Transverse colon (tissue), 4 donors: ENCODE measurements at regions of chr2 and their contacts with region 1.

Region 1: DNA sequence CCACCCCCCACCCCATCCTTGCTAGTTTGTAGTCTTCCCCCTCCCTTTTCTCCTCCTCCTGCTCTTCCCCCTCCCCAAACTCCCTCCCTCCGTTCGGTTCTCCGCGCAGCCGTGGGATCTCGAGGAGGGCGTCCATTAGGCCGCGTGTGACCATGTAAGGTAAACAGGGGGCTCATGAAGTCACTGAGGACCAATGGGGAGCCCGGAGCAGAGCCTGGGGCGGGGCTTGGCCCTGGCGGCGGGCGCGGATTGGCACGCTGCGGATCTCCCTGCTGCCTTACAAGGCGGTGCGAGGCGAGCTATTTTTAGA is 246 bp upstream of the KLF7 start:
- DNase-seq: peak; percentile 95
- H3K4me3 ChIP-seq: peak overlapping the region in 3 of 4 donors; percentile 69 to 87 (median 87)
- H3K27ac ChIP-seq: peak overlapping the region; percentile 99 to 100 (median 100)
- H3K4me1 ChIP-seq: peaks cover 0 to 20% (median 15%) of the 10 kb centered on the region in 4 donors
- H3K27me3 ChIP-seq: peaks cover 41% of the 10 kb centered on the region
- CTCF ChIP-seq: no peak
- EP300 ChIP-seq: no peak
- POLR2A ChIP-seq: no peak

Region 2: DNA sequence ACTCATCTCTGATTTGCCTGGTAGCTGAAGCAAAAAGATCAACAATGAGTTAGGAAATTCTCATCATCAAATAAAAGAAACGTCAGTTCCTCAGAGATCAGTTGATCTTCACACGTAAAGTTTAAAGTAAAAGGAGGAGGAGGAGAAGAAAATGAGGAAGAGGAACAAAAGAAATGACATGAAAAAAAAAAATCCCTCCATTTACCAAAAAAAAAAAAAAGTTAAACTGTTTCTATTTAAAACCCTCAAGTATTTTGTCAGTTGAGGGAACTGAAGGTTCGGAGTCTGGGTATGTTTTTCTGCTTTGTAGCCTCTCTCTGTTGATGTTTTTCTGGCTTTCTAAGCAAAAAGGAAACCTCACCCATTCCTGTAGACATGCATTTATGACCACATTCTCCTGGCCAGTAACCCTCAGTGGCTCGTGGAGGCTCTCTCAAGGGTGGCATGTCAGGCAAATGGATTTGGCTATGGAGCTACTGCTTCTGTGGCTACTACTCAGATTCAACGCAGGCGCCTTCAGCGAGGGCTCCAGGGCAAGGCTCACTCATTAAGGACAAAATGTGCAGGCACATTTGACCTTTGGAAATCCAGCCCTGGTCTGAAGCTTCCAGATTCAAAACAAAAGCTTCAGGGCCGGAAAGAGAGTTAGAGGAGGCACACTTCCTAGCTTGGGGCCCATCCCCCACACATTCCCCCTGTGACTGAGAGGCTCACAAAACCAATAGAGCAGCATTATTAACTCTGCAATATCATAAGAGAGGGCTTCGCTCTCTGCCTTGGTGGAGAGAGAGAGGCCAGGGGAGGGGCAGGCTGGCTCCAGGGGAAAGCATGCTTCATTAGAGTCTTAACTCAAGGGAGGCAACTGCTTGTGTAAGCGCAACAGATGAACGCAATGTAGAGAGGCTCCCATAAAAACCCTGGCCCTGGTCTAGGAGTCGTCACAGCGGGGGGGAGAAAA is 22.5 kb before region 1 on chr2:
- in situ Hi-C with region 1: no loop called
- intact Hi-C with region 1: loop called (anchors 1 kb)
- DNase-seq: peak; percentile 61
- H3K4me3 ChIP-seq: peak overlapping the region in 1 of 4 donors; percentile 22
- H3K27ac ChIP-seq: peak overlapping the region; percentile 74 to 90 (median 86)
- H3K4me1 ChIP-seq: peaks cover 18 to 45% (median 25%) of the 10 kb centered on the region in 4 donors
- H3K27me3 ChIP-seq: no peaks in the 10 kb centered on the region
- CTCF ChIP-seq: no peak
- EP300 ChIP-seq: no peak
- POLR2A ChIP-seq: peak; percentile 39

Region 3: DNA sequence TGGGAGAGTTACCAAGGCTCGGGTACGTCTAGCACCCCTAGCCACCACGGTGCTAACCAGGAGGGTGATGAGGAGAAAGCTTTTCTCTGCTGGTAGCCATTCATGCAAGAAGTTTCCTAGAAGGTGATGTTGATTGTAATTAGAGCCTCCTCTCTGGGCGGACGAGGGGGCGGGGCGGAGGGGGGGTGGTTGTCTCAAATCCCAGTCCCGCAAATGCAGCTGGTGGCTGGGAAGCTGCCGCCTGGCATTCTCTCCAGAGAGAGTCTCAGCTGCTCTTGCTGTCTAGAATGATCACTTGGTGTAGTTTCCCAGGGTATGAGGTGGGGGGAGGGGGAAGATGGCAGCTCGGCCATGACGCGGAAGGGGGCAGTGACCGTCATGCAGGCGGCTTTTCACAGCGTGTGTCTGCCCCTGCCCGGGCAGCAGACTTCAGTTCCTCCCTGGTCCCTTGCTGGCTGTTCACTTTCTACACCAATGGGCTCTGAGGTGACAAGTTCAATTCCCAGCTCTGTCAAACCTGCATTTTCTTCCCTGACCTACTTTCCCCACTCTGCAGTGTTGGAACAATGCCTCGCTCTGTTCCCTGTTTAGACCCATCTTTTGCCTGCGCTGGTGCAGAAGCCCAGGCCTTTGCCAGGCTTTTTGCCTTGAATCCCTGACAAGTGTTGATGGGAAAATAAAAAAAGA is 61.2 kb after region 1 on chr2:
- in situ Hi-C with region 1: no loop called
- intact Hi-C with region 1: loop called (anchors 1 kb)
- DNase-seq: peak; percentile 10
- H3K4me3 ChIP-seq: peak overlapping the region in 1 of 4 donors; percentile 15
- H3K27ac ChIP-seq: peak overlapping the region; percentile 54 to 73 (median 68)
- H3K4me1 ChIP-seq: peaks cover 0 to 22% (median 12%) of the 10 kb centered on the region in 4 donors
- H3K27me3 ChIP-seq: no peaks in the 10 kb centered on the region
- CTCF ChIP-seq: no peak
- EP300 ChIP-seq: no peak
- POLR2A ChIP-seq: no peak

Region 4: DNA sequence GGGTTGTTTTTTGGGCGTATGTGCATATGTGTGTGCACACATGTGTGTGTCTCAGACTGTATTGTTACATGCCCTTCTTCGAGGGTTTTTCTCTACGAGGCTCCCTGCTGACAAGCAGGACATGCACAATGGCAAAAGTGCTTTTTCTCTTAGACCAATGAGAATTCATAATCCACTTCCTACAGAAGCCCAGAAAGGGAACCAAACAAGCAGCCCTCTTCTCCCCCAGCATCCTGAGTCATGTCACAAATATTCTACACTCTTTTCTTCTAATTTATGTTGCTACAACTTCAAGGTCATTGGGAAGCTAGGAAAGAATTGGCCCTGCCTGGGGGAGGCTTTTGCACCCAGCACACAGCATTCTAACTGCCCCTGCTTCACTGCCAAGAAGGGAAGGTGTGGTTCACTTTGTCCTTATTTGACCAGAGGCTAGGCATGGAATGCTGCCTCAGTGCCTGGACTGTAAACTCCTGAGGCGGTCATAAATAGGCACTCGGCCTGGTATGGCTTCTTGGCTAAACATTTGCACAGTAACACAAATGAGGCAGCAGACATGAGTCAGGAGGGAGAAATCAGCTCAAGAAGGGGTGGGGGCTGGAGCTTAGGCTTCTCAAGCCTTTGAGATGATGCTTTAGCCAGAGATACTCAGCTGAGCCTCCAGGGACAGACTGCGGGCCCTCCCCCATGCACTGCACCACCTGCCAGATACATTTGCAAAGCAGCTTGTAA is 92.4 kb after region 1 on chr2:
- in situ Hi-C with region 1: loop called in 1 of 4 experiments (anchors 25 kb)
- intact Hi-C with region 1: loop called (anchors 10 kb)
- DNase-seq: peak; percentile 78
- H3K4me3 ChIP-seq: no peak overlapping the region
- H3K27ac ChIP-seq: peak overlapping the region; percentile 67 to 77 (median 74)
- H3K4me1 ChIP-seq: peaks cover 10 to 54% (median 26%) of the 10 kb centered on the region in 4 donors
- H3K27me3 ChIP-seq: no peaks in the 10 kb centered on the region
- CTCF ChIP-seq: peak in 1 of 5 experiments; percentile 35
- EP300 ChIP-seq: peak; percentile 72
- POLR2A ChIP-seq: no peak

Region 5: GRCh38 chr2:207334624-207335371 is 168.8 kb after region 1 on chr2:
- in situ Hi-C with region 1: no loop called
- intact Hi-C with region 1: loop called (anchors 5 kb)
- DNase-seq: peak; percentile 47
- H3K4me3 ChIP-seq: peak overlapping the region in 3 of 4 donors; percentile 6 to 17 (median 8)
- H3K27ac ChIP-seq: peak overlapping the region; percentile 75 to 83 (median 79)
- H3K4me1 ChIP-seq: peaks cover 0 to 5% (median 2%) of the 10 kb centered on the region in 4 donors
- H3K27me3 ChIP-seq: no peaks in the 10 kb centered on the region
- CTCF ChIP-seq: no peak
- EP300 ChIP-seq: peak; percentile 86
- POLR2A ChIP-seq: no peak

Region 6: GRCh38 chr2:207375192-207375861 is 209.3 kb after region 1 on chr2:
- in situ Hi-C with region 1: no loop called
- intact Hi-C with region 1: no loop called
- DNase-seq: no peak
- H3K4me3 ChIP-seq: no peak overlapping the region
- H3K27ac ChIP-seq: no peak overlapping the region
- H3K4me1 ChIP-seq: no peaks in the 10 kb centered on the region
- H3K27me3 ChIP-seq: no peaks in the 10 kb centered on the region
- CTCF ChIP-seq: no peak
- EP300 ChIP-seq: no peak
- POLR2A ChIP-seq: no peak

Region 7: DNA sequence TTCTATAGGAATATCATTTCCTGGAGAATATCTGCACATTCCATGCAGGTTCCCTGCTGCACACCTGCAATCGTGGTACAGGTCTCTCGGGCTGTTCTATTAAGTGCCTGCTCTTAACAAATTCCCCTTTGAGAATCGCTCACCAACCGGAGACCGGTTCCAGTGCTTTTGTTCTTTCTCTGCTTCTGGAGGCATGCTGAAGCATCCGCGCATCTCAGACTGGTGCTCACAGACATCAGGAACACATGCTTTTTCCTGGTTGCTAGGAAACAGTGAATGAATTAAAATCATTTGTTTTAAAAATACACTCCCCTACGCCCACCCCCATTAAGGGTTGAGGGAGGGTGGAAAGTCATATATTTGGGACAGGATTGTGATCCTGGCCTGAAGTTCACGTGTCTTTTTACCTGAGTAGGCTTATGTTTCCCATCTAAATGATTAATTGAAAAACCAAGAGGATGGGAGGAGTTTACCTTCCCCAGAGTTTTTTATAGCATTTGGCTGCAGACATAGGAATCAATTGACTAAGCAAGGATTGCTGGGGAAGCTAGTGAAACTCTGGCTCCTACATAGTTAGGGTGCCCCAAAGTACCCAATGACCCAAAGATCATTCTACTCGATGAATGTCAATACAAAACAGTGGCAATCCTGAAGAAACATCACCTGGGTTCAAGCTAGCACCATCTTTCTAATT is 1024.0 kb after region 1 on chr2 and contains the start of gene C2orf80:
- in situ Hi-C with region 1: no loop called
- intact Hi-C with region 1: no loop called
- DNase-seq: no peak
- H3K4me3 ChIP-seq: no peak within 1 kb of the TSS
- H3K27ac ChIP-seq: no peak within 1 kb of the TSS
- H3K4me1 ChIP-seq: no peaks in the 10 kb centered on the region
- H3K27me3 ChIP-seq: no peaks in the 10 kb centered on the region
- CTCF ChIP-seq: no peak
- EP300 ChIP-seq: no peak
- POLR2A ChIP-seq: no peak
- total RNA-seq, gene C2orf80: not detected